Mucosa of descending colon (tissue), 3 donors: ENCODE measurements at regions of chr20 and their contacts with region 1.

Region 1: DNA sequence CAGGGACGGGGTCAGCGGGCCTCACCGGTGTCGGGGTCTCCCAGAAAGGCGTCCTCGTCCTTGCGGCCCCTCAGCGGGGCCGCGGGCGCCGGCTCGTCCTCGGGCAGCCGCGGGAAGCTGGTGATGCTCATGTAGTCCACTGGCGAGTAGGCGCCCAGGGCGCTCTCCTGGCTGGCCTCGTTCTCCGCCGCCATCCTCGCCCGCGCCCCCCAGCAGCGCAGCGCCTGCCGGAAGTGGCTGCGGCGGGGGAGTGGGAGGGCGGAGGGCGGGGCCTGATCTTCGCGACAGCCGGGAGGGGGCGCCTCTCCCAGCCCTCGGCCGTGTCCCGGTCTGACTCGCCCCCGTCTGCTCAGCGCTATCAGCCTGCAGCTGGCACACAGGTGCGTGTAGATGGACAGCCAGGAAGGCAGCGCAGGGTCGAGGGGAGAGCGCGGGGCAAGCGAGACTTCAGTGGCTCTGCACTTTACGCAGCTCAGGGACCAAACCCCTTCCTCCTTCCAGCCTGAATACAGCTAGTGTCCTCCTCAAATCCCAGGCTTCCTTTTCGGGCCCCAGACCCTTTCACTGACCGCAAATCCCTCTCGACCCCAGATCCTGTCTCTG is at the start of gene GGT7:
- DNase-seq: peak; percentile 89 to 93 (median 90)
- ATAC-seq: peak; percentile 52
- H3K4me3 ChIP-seq: peak within 1 kb of the TSS; percentile 32
- H3K4me1 ChIP-seq: peaks cover 30% of the 10 kb centered on the region
- CTCF ChIP-seq: peak; percentile 73
- total RNA-seq, gene GGT7: 14.4 to 24.6 (median 20.3) TPM

Region 2: DNA sequence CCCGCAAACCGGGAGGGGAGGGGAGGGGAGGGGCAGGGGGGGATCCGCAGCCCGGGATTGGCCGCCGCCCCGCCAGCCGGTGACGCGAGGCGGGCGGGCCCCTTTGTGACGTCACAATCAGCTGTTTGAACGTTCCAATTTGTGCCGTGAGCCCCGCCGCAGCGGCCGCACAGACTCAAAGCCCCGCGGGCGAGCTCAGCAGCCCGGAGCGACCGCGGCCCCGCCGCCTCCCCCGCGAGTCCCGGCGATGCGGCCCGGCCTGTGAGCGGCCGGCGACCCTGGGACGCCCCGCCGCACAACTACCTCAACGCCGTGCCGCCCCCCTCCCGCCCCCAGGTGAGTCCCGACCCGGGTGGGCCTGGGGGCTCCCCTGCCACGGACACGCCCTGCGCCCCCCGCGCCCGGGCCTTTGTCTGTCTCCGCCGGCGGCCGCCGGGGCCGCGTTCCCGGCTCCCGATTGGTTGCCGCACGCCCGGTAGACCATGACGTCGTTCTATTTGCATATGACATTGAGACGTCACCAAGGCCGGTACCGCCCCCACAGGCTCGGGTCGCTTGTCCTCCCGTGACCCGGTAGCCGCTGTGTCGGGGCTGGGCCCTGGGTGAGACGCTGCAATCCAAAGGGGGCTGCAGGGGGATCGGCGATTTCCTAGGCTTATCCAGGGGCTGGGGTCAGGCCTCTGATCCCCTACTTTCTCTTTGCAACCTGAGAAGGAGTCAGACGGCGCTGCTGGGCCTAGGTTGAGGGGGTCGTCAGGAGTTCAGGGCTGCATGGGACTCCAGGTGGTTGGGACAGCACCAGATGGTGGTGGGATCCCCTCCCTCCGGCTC is 168.3 kb before region 1 on chr20 and contains the start of gene TP53INP2:
- intact Hi-C with region 1: no loop called
- DNase-seq: peak; percentile 95 to 97 (median 96)
- ATAC-seq: peak; percentile 74
- H3K4me3 ChIP-seq: peak within 1 kb of the TSS; percentile 72
- H3K4me1 ChIP-seq: peaks cover 32% of the 10 kb centered on the region
- CTCF ChIP-seq: no peak
- total RNA-seq, gene TP53INP2: 65.9 to 155 (median 114) TPM

Region 3: GRCh38 chr20:34955232-34956040 is 82.7 kb after region 1 on chr20 and contains the starts of genes GSS and MYH7B:
- intact Hi-C with region 1: loop called in 1 of 2 experiments (anchors 2 kb)
- DNase-seq: peak; percentile 97 to 100 (median 99)
- ATAC-seq: peak; percentile 92
- H3K4me3 ChIP-seq: peak within 1 kb of the TSS; percentile 37
- H3K4me1 ChIP-seq: peaks cover 22% of the 10 kb centered on the region
- CTCF ChIP-seq: peak; percentile 12
- total RNA-seq, gene GSS: 45.2 to 97.3 (median 91.8) TPM
- total RNA-seq, gene MYH7B: 0.76 to 1.9 (median 0.99) TPM

Region 4: GRCh38 chr20:35001596-35002362 is 129.1 kb after region 1 on chr20:
- intact Hi-C with region 1: no loop called
- DNase-seq: peak; percentile 44 to 59 (median 48)
- ATAC-seq: no peak
- H3K4me3 ChIP-seq: no peak overlapping the region
- H3K4me1 ChIP-seq: peaks cover 4% of the 10 kb centered on the region
- CTCF ChIP-seq: no peak

Region 5: GRCh38 chr20:35092524-35093266 is 220.0 kb after region 1 on chr20 and contains the start of gene TRPC4AP:
- intact Hi-C with region 1: loop called in 1 of 2 experiments (anchors 5 kb)
- DNase-seq: peak; percentile 91 to 93 (median 93)
- ATAC-seq: peak; percentile 99
- H3K4me3 ChIP-seq: peak within 1 kb of the TSS; percentile 58
- H3K4me1 ChIP-seq: peaks cover 10% of the 10 kb centered on the region
- CTCF ChIP-seq: peak; percentile 97
- total RNA-seq, gene TRPC4AP: 49.6 to 60.5 (median 53.8) TPM

Region 6: DNA sequence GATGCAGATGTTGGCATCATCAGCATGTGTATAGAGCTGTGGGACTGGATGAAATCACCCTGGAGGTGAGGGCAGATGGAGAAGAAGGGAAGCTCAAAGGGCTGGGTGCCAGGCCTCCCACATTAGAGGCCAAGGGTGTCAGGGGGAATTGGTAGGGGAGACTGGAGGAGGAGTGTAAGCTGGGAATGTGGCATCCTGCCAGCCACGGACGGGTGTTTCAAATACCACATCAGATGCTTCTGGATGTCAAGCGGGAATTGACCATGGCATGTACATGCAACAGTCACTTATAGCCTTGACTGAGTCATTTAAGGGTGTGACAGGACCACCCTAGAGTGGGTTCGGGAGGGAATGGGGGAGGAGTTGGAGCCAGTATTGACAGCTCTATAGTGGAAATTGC is 678.8 kb after region 1 on chr20:
- intact Hi-C with region 1: no loop called
- DNase-seq: no peak
- ATAC-seq: no peak
- H3K4me3 ChIP-seq: no peak overlapping the region
- H3K4me1 ChIP-seq: no peaks in the 10 kb centered on the region
- CTCF ChIP-seq: no peak